Left cardiac atrium (tissue), 4 donors: ENCODE measurements at regions of chr15 and their contacts with region 1.

Region 1: DNA sequence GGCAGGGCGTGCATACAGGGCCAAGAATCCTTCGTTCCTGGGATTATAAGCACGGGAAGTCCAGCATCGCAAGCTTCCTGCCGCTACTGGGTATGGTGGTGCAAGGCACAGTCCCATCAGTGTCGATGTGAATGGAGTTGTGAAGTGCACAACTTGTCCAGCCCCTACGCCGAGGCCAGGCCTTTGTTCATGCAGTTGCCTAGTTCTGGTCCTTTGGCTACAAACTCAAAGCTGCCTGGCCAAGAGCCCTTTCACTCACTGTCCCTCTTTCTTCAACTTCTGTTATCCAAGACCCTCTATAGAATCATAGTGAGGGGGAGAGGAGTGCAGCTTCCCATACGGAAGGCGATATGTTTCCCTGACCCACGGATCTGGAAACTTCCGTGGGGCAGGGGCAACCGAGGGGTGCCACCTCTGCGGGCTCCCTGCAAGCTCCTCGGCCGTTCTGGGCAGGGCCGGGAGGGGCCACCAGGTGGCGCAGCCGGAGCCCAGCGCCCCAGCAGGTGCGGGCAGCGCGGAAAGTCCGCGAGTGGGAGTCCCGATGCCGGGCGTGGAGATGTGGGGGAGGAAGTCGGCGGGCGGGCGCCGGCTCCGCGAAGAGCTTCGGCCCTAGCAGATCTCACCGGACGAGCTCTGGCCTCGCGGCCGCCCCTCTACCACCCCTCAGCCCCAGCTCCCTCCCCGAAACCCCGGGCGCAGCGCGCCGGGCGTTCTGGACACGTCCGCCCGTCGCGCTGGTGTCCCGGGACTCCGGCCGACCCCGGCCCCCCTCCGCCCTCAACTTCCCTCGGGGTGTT is 693 bp downstream of the RASGRP1 start:
- DNase-seq: peak; percentile 73
- ATAC-seq: peak; percentile 92 to 93

Region 2: GRCh38 chr15:38275959-38276358 is 288.0 kb before region 1 on chr15:
- intact Hi-C with region 1: no loop called
- DNase-seq: no peak
- ATAC-seq: no peak

Region 3: DNA sequence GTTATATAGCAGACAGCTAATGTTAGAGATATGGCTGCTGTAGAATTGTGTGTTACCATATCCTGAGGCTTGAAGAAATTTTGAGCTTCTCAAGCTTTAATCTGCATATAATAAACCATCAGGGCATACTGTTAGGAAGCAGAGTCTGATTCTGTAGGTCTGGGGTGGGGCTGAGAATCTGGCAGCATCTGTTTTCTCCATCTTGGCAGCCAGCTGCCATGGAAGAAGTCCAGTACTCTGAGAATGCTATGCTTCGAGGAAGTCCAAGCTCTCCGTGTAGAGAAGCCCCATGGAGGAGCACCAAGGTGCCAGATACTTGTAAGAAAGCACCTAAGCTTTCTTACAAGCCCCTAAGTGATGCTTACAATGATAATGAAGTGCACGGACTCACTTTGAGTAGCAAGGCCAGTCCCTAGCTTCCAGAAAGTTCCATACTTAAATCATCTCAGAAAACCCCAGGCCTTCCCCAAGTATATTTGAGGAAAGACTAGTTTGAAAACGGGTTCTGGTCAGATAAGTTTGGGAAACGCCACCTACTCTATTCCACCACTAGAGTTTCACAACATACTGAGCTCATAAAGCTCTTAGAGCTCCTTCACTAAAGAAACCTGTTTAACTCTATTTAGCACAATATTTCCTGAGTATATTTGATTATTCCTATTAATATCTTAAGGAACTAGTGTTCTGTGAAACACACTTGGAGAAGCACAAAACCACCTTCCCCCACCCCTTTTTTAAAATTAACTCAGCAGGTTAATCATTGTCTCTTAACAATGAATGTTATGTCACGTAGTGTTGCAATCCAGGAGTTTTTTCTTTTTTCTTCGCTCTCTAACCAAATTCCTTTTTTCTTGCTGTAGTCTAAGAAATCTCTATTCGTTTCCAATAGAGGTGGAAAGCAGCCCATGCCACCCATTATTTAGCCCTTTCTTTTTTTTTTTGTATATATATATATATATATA is 60.6 kb after region 1 on chr15:
- intact Hi-C with region 1: loop called (anchors 2 to 10 kb)
- DNase-seq: no peak
- ATAC-seq: peak in 1 of 2 donors; percentile 29

Region 4: DNA sequence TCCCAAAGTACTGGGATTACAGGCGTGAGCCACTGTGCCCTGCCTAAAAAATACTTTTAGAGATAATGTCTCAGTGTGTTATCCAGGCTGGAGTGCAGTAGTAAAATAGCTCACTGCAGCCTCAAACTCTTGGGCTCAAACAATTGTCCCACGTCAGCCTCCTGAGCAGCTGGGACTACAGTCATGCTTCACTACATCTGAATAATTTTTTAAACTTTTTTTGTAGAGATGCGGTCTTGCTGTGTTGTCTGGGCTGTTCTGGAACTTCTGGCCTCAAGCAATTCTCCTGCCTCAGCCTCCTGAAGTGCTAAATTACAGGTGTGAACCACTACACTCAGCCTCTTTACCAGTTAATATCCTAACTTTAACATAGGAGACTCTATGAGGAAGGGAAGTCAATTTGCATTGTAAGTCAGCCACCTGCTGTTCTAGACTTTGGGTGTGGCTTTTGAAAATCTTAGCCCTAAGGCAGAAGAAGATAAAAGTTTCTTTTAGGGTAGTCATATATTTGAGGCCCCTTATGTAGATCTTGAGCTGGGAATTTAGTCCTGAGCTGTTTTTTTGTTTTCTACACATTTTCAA is 78.9 kb after region 1 on chr15:
- intact Hi-C with region 1: no loop called
- DNase-seq: no peak
- ATAC-seq: no peak

Region 5: GRCh38 chr15:38678246-38678645 is 114.3 kb after region 1 on chr15:
- intact Hi-C with region 1: loop called in 1 of 2 experiments (anchors 5 kb)
- DNase-seq: no peak
- ATAC-seq: no peak

Region 6: GRCh38 chr15:38699633-38700230 is 135.8 kb after region 1 on chr15:
- intact Hi-C with region 1: no loop called
- DNase-seq: peak; percentile 53
- ATAC-seq: peak; percentile 25 to 52